ENCODE measurements at regions of chr12 and their contacts with region 1.

Region 1: GRCh38 chr12:85029456-85029855 is 6.6 kb downstream of the TSPAN19 start:
- DNase-seq: no peak
- ATAC-seq: no peak

Region 2: DNA sequence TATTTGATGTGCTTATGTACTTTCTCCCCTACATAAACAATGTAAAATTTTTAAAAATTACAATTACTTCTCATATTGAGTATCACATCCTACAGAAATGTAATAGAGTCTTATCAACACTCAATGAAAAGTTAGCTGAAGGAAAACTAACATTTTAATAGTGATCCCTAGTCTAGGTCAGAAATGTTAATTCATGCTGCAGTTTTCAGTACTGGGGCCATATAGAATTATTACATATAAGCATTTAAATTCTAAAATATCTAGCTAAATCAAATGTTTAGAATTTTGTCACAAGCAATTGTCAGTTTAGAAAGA is 154.7 kb before region 1 on chr12:
- intact Hi-C with region 1: loop called (anchors 5 kb)
- DNase-seq: no peak
- ATAC-seq: no peak

Measured in Right ventricle myocardium superior (tissue), 1 donor.